ENCODE measurements at regions of chr1 and their contacts with region 1.

Region 1: DNA sequence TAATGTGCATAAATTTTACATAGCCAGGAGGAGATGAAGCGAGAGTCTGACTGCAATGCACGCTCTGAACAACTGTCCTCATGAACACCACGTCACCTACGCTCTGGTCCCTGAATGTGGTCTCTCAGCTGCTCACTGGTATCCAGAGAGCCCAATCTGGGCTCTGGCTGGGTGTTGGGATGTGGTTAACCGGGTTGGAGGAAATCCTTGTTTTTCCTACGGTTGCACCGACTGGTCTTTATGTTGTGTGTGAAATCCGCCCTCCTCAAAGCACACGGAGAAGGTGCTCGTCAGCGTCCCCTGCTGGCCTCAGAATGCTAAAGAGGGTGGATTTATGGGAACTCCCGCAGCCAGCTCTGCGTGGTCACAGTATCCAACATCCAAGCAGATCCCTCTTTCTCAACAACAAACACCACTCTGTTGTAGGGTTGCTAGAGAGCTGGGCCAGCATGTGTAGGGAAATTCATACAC is 51.8 kb upstream of the FAM89A start:
- DNase-seq: peak; percentile 69
- ATAC-seq: no peak
- H3K4me3 Mint-ChIP-seq: no peak overlapping the region
- H3K27ac Mint-ChIP-seq: no peak overlapping the region
- H3K4me1 Mint-ChIP-seq: no peaks in the 10 kb centered on the region
- H3K27me3 Mint-ChIP-seq: peaks cover 13% of the 10 kb centered on the region

Region 2: DNA sequence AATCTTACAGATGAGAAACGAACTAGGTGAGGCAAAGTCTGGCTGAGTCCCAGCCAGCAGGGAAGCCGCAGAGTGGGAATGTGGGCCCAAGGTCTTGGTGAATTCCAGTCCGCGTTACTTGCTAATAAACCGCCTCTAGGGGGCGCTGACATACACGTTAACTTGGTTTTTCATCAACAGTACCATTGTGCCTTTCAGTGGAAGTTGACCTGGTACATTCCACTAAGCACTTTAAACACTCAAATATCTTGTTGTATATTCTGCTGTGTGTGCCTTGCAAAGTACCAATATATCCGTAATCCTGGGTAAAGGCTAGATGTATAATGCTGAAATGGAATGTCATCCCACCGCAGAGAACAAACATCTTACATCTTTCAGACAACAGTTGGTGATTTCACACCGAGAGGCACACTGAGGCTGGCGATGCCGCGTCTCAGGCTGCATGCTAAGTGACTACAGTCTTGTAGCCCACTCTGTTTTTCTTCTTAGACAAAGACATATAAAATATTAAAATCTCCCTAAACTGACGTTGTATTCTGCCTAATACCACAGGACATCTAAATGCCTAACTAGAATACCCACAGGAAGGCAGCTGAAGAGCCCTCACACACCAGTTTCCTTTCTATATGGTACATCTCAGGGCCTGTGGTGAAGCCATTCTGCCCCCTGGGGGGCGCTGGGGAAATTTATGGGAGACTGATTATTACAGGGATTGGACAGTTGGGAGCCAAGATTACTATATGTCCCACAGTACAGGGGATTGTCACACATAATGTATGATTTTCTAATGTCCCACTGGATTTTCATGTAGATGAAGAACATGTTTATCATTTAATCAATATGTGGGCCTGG is 174.4 kb before region 1 on chr1:
- CTCF ChIA-PET with region 1: interaction called, 14 read pairs
- POLR2A ChIA-PET with region 1: no interaction called
- intact Hi-C with region 1: loop called (anchors 1 to 5 kb)
- DNase-seq: peak; percentile 85
- ATAC-seq: peak; percentile 80
- H3K4me3 Mint-ChIP-seq: no peak overlapping the region
- H3K27ac Mint-ChIP-seq: no peak overlapping the region
- H3K4me1 Mint-ChIP-seq: peaks cover 7% of the 10 kb centered on the region
- H3K27me3 Mint-ChIP-seq: no peaks in the 10 kb centered on the region

Region 3: GRCh38 chr1:231130544-231130943 is 38.7 kb after region 1 on chr1:
- CTCF ChIA-PET with region 1: no interaction called
- POLR2A ChIA-PET with region 1: no interaction called
- intact Hi-C with region 1: no loop called
- DNase-seq: no peak
- ATAC-seq: no peak
- H3K4me3 Mint-ChIP-seq: no peak overlapping the region
- H3K27ac Mint-ChIP-seq: no peak overlapping the region
- H3K4me1 Mint-ChIP-seq: no peaks in the 10 kb centered on the region
- H3K27me3 Mint-ChIP-seq: no peaks in the 10 kb centered on the region

Region 4: GRCh38 chr1:231147916-231148315 is 56.0 kb after region 1 on chr1:
- CTCF ChIA-PET with region 1: no interaction called
- POLR2A ChIA-PET with region 1: no interaction called
- intact Hi-C with region 1: no loop called
- DNase-seq: no peak
- ATAC-seq: no peak
- H3K4me3 Mint-ChIP-seq: no peak overlapping the region
- H3K27ac Mint-ChIP-seq: no peak overlapping the region
- H3K4me1 Mint-ChIP-seq: no peaks in the 10 kb centered on the region
- H3K27me3 Mint-ChIP-seq: peaks cover 30% of the 10 kb centered on the region

Region 5: DNA sequence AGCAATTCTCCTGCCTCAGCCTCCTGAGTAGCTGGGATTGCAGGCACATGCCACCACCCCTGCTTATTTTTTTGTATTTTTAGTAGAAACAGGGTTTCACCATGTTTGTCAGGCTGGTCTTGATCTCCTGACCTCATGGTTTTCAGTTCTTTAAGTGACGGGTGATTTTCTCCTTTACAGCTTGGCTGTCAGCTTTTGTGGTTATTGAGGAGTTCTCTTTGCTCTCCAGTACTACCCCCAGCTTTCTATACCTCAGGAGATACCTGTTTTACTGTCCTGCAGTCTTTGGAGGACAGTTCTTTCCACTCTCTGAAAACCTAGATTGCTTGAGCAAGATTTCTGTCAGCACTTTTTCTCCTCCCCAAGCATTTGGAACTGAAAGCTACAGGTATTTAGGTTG is 376.1 kb after region 1 on chr1:
- CTCF ChIA-PET with region 1: no interaction called
- POLR2A ChIA-PET with region 1: interaction called, 11 read pairs
- intact Hi-C with region 1: no loop called
- DNase-seq: no peak
- ATAC-seq: no peak
- H3K4me3 Mint-ChIP-seq: no peak overlapping the region
- H3K27ac Mint-ChIP-seq: no peak overlapping the region
- H3K4me1 Mint-ChIP-seq: peaks cover 17% of the 10 kb centered on the region
- H3K27me3 Mint-ChIP-seq: peaks cover 34% of the 10 kb centered on the region